Endothelial cell of umbilical vein (primary cell): ENCODE measurements at regions of chr19 and their contacts with region 1.

Region 1: GRCh38 chr19:15324791-15325519 is 7.4 kb downstream of the BRD4 start:
- DNase-seq: no peak
- H3K4me3 ChIP-seq: no peak overlapping the region
- H3K27ac ChIP-seq: no peak overlapping the region
- H3K4me1 ChIP-seq: peaks cover 28% of the 10 kb centered on the region
- H3K27me3 ChIP-seq: no peaks in the 10 kb centered on the region
- CTCF ChIP-seq: no peak
- POLR2A ChIP-seq: no peak

Region 2: GRCh38 chr19:14992780-14993179 is 332.2 kb before region 1 on chr19:
- CTCF ChIA-PET with region 1: no interaction called
- POLR2A ChIA-PET with region 1: no interaction called
- dilution Hi-C with region 1: no loop called
- intact Hi-C with region 1: no loop called
- DNase-seq: no peak
- H3K4me3 ChIP-seq: no peak overlapping the region
- H3K27ac ChIP-seq: no peak overlapping the region
- H3K4me1 ChIP-seq: no peaks in the 10 kb centered on the region
- H3K27me3 ChIP-seq: no peaks in the 10 kb centered on the region
- CTCF ChIP-seq: no peak
- POLR2A ChIP-seq: no peak

Region 3: DNA sequence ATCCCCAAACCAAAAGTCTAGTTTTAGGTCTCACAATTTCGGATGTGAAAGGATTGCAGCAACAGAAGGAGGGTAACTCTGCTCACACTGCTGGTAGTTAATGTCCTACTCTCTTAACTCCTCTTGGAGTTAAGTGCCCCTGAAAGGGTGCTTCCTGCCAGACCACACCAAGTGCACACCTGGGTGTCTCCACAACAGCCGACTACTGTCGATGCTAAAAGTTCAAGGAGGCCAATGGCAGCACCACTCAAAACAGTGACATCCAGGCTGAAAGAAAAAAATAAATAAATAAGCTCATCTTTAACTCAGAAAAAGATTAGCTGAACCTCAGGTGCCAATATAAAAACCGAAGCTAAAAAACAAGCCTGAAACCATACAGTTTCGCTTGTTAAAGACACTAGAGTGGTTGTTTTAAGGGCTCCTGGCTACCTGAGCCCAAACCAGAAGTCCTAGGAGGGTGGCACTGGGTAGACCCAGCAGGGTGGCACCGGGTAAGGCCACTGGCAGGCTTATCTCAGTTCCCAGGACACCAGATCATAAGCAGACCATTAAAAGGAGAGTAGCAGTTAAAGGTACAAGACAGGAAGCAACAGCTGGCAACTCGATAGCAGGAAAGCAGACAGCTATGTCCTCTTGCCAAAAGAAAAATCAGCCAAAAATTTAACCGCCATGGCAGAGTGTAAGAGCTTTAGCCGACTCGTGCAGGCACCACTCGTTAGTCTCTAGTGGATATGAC is 31.9 kb before region 1 on chr19:
- CTCF ChIA-PET with region 1: interaction called, 3 read pairs
- POLR2A ChIA-PET with region 1: no interaction called
- dilution Hi-C with region 1: no loop called
- intact Hi-C with region 1: loop called (anchors 5 kb)
- DNase-seq: peak; percentile 36
- H3K4me3 ChIP-seq: no peak overlapping the region
- H3K27ac ChIP-seq: no peak overlapping the region
- H3K4me1 ChIP-seq: peaks cover 20% of the 10 kb centered on the region
- H3K27me3 ChIP-seq: no peaks in the 10 kb centered on the region
- CTCF ChIP-seq: no peak
- POLR2A ChIP-seq: no peak

Region 4: DNA sequence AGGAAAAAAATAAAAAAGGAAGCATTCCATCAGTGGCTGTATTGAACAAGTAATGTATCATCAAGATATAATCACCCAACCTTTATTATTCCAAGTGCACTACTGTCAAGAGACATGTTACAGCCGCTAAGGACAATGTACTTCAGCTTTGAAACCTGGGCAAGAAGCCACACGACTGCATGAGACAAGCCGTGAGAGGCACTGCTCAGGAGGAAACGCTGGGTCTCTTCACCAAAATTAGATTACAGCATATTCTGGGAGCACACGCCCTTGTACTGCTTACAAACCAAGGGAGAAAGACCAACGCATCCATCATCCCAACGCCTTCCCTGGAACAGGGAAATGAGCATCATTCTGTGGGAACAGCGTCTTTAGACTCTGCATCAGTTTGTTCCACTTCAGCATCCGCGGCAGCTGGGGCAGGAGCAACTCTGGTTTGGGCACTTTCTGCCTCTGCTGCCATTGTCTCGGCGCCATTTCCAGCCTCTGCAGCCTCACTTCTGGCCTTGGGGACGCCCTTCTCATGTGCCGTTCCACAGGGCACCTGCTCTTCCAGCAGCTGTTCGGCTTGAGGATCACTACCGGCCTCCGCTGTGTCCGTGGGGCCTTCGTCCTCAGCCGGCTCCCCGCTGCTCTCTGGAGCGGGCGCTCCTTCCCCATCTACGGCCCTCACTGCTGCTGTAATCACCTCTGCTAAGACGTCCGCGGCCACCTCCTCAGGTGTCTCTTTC is 29.8 kb after region 1 on chr19:
- CTCF ChIA-PET with region 1: no interaction called
- POLR2A ChIA-PET with region 1: no interaction called
- dilution Hi-C with region 1: no loop called
- intact Hi-C with region 1: no loop called
- DNase-seq: no peak
- H3K4me3 ChIP-seq: no peak overlapping the region
- H3K27ac ChIP-seq: no peak overlapping the region
- H3K4me1 ChIP-seq: no peaks in the 10 kb centered on the region
- H3K27me3 ChIP-seq: no peaks in the 10 kb centered on the region
- CTCF ChIP-seq: no peak
- POLR2A ChIP-seq: peak; percentile 43

Region 5: DNA sequence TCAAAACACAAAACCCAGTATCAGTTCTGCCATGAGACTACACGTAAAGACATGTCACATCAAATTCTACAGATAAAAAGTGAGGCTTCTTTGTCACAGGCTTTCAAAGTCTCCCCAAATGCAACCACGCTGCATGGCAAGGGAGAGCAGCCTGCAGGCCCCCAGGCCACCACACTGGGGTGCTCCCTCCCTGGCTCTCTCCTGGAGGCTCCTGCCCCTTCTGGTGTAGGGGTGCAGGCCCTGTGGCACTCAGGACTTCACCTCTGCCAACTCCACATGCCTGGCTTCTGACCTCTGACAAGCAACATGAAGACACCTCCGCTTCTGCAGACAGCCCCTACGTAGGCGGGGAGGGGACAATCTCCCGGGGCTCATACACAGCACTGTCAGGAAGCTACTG is 40.3 kb after region 1 on chr19:
- CTCF ChIA-PET with region 1: no interaction called
- POLR2A ChIA-PET with region 1: no interaction called
- dilution Hi-C with region 1: no loop called
- intact Hi-C with region 1: no loop called
- DNase-seq: no peak
- H3K4me3 ChIP-seq: no peak overlapping the region
- H3K27ac ChIP-seq: no peak overlapping the region
- H3K4me1 ChIP-seq: no peaks in the 10 kb centered on the region
- H3K27me3 ChIP-seq: no peaks in the 10 kb centered on the region
- CTCF ChIP-seq: no peak
- POLR2A ChIP-seq: no peak

Region 6: GRCh38 chr19:15479391-15480345 is 154.7 kb after region 1 on chr19 and contains the start of gene PGLYRP2:
- CTCF ChIA-PET with region 1: no interaction called
- POLR2A ChIA-PET with region 1: no interaction called
- dilution Hi-C with region 1: no loop called
- intact Hi-C with region 1: no loop called
- DNase-seq: no peak
- H3K4me3 ChIP-seq: no peak within 1 kb of the TSS
- H3K27ac ChIP-seq: no peak within 1 kb of the TSS
- H3K4me1 ChIP-seq: no peaks in the 10 kb centered on the region
- H3K27me3 ChIP-seq: no peaks in the 10 kb centered on the region
- CTCF ChIP-seq: peak in 1 of 2 donors; percentile 15
- POLR2A ChIP-seq: no peak
- total RNA-seq, gene PGLYRP2: 0.18 TPM in 1 of 2 replicates, not detected in the other